Mammary epithelial cell (primary cell): ENCODE measurements at regions of chr17 and their contacts with region 1.

Region 1: DNA sequence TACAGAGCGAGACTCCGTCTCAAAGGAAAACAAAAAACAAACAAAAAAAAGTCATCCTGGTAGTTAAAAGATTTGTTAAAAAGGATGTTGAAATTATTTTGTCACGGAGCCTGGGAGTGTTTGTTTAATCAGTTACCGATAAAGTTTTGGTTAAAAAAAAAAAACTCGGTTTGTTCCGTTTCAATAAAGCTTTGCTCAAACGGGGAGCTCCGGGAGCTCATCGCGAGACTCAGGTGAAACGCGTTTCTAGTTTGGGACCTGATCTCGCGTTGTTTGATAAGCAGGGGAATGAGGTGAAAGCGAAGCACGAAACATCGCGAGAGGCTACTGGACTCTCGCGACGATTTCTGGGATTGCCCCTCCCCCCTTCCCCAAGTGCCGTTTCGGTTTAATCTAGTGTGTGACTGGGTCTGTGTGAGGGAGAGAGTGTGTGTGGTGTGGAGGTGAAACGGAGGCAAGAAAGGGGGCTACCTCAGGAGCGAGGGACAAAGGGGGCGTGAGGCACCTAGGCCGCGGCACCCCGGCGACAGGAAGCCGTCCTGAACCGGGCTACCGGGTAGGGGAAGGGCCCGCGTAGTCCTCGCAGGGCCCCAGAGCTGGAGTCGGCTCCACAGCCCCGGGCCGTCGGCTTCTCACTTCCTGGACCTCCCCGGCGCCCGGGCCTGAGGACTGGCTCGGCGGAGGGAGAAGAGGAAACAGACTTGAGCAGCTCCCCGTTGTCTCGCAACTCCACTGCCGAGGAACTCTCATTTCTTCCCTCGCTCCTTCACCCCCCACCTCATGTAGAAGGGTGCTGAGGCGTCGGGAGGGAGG is at the start of gene CDK12:
- DNase-seq: peak; percentile 99
- H3K4me3 ChIP-seq: peak within 1 kb of the TSS; percentile 84 to 95 (median 88)
- H3K27ac ChIP-seq: peak within 1 kb of the TSS; percentile 97
- H3K4me1 ChIP-seq: no peaks in the 10 kb centered on the region
- H3K27me3 ChIP-seq: no peaks in the 10 kb centered on the region
- CTCF ChIP-seq: no peak
- total RNA-seq, gene CDK12: 44.5 to 66.6 TPM

Region 2: DNA sequence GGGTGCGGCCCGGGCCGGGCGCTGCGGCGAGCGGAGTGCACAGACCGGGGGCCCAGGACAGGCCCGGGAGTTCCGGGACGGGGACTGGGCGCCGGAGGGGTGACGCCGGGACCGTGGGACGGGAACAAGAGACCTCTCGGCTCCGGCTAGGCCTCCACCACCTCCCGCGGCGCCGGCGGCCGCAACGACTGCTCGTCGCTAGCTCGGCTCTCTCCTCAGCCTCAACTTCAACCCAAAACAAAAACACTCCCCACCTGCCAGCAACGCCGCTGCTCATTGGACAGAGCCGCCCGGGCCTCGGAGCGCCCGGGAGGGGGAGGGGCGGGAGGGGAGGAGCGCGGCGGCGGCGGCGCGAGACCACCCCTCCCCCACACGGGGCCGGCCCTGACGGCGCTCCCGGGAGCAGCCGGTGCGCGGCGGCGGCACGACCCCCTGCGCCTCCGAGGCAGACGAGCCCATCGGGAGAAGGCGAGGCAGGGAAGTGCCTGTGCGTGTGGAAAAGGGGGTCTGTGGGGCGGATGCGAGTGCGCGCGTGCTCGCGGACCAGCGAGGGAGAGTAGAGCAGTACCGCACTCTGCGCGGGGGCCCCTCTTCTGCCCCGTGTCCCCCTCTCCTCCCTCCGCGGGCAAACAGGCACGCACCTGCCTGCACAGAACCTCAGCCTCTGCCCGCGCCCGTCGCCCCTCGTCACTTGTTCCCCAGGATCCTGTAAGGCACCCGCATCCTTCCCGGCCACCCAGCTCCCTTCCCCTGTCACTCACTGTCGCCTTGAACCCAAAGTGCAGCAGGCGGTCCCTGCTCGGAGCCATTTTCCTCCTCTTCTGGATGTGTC is 59.7 kb before region 1 on chr17 and contains the start of gene FBXL20:
- CTCF ChIA-PET with region 1: no interaction called
- dilution Hi-C with region 1: loop called (anchors 5 kb)
- in situ Hi-C with region 1: no loop called
- intact Hi-C with region 1: loop called (anchors 2 kb)
- DNase-seq: peak; percentile 89
- H3K4me3 ChIP-seq: peak within 1 kb of the TSS; percentile 95 to 100 (median 97)
- H3K27ac ChIP-seq: peak within 1 kb of the TSS; percentile 59
- H3K4me1 ChIP-seq: peaks cover 21% of the 10 kb centered on the region
- H3K27me3 ChIP-seq: no peaks in the 10 kb centered on the region
- CTCF ChIP-seq: no peak
- total RNA-seq, gene FBXL20: 13.0 to 17.0 TPM

Region 3: GRCh38 chr17:39450847-39451581 is 10.3 kb before region 1 on chr17 and contains the start of gene MED1:
- CTCF ChIA-PET with region 1: no interaction called
- dilution Hi-C with region 1: no loop called
- in situ Hi-C with region 1: no loop called
- intact Hi-C with region 1: loop called (anchors 1 kb)
- DNase-seq: peak; percentile 97
- H3K4me3 ChIP-seq: peak within 1 kb of the TSS; percentile 77 to 82 (median 79)
- H3K27ac ChIP-seq: peak within 1 kb of the TSS; percentile 91
- H3K4me1 ChIP-seq: peaks cover 9% of the 10 kb centered on the region
- H3K27me3 ChIP-seq: no peaks in the 10 kb centered on the region
- CTCF ChIP-seq: no peak
- total RNA-seq, gene MED1: 26.7 to 41.7 TPM

Region 4: GRCh38 chr17:39485555-39485954 is 24.2 kb after region 1 on chr17:
- CTCF ChIA-PET with region 1: no interaction called
- dilution Hi-C with region 1: no loop called
- in situ Hi-C with region 1: no loop called
- intact Hi-C with region 1: loop called (anchors 1 kb)
- DNase-seq: peak; percentile 94
- H3K4me3 ChIP-seq: no peak overlapping the region
- H3K27ac ChIP-seq: peak overlapping the region; percentile 60
- H3K4me1 ChIP-seq: peaks cover 17% of the 10 kb centered on the region
- H3K27me3 ChIP-seq: no peaks in the 10 kb centered on the region
- CTCF ChIP-seq: no peak

Region 5: DNA sequence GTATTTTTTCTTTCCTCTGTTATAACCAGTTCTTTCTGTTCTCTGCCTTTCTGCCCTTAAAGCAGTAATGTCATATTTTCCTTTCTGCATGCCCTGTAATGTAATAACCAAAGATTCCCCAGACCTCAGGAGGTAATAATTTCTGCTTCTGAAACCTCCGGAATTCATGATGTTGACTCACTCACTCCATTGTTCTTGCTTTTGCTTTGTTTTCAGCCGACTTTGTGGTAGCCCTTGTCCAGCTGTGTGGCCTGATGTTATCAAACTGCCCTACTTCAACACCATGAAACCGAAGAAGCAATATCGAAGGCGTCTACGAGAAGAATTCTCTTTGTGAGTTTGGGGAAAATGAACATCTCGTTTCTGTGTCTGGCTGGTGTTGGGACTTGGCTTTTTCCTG is 55.9 kb after region 1 on chr17:
- CTCF ChIA-PET with region 1: no interaction called
- dilution Hi-C with region 1: no loop called
- in situ Hi-C with region 1: no loop called
- intact Hi-C with region 1: no loop called
- DNase-seq: peak; percentile 7
- H3K4me3 ChIP-seq: no peak overlapping the region
- H3K27ac ChIP-seq: no peak overlapping the region
- H3K4me1 ChIP-seq: no peaks in the 10 kb centered on the region
- H3K27me3 ChIP-seq: no peaks in the 10 kb centered on the region
- CTCF ChIP-seq: no peak